Transverse colon (tissue), 4 donors: ENCODE measurements at regions of chr1 and their contacts with region 1.

Region 1: DNA sequence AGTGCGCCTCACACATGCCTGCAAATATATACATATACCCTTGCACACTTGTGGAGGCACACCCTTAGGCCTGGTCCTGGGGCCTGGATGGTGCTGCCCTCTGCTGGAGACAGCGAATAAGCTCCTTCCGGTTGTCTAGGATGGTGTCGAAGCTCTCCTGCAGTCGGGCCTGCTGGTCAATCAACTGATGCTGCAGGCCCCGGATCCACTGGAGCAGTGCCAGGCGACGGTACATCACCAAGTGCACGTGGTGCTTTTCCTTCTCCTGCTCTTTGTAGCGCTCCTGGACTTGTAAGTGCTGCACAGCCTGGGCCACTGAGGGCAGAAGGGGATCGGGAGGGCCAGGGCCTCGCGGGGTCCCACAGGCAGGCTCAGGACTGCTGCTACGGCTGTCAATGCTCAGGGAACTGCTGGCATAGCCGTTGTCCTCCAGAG is 3.1 kb downstream of the C1orf216 start:
- DNase-seq: peak; percentile 80
- H3K4me3 ChIP-seq: no peak overlapping the region
- H3K27ac ChIP-seq: no peak overlapping the region
- H3K4me1 ChIP-seq: peaks cover 12 to 38% (median 18%) of the 10 kb centered on the region in 4 donors
- H3K27me3 ChIP-seq: no peaks in the 10 kb centered on the region
- CTCF ChIP-seq: peak; percentile 62 to 89 (median 80)
- EP300 ChIP-seq: no peak
- POLR2A ChIP-seq: no peak

Region 2: DNA sequence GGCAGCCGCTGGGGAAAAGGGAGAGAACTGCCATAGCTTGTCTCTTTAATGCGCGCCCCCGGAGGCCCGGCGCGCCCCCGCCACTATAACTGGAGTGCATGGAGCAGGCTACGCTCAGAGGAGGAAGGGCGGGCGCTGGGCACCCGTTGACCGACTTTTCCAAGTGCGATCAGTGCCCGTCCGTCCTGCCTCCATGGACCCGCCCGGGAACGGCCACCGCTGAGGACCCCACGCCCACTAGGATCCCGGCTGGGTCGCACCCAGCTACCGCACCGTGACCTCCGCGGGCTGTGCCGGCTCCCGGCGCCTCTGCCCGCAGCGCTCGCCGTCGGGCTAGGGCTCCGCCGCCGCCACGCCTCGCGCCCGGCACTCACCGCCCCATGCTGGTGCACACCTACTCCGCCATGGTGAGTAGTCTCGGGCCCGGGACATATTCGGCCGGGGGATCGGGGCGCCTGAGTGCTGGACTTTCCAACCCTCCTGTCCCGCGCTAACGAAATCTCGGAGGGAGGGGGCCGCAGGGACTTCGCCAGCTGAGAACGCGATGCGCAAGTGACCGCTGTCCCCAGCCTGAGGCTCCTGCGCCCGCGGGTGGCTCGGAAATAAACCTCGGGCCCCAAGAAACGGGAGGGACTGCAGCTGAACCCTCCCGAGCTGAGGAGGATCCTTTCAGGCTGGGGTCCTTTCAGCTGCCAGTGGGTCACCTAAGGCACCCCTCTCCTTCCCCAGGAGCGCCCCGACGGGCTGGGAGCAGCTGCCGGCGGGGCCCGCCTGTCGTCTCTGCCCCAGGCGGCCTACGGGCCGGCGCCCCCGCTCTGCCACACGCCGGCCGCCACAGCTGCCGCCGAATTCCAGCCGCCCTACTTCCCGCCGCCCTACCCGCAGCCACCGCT is 142.1 kb before region 1 on chr1 and contains the start of gene TFAP2E:
- in situ Hi-C with region 1: loop called in 3 of 4 experiments (anchors 5 to 10 kb)
- intact Hi-C with region 1: no loop called
- DNase-seq: peak; percentile 65
- H3K4me3 ChIP-seq: peak within 1 kb of the TSS; percentile 22 to 43 (median 36)
- H3K27ac ChIP-seq: no peak within 1 kb of the TSS
- H3K4me1 ChIP-seq: peaks cover 0 to 35% (median 24%) of the 10 kb centered on the region in 4 donors
- H3K27me3 ChIP-seq: peaks cover 69% of the 10 kb centered on the region
- CTCF ChIP-seq: no peak
- EP300 ChIP-seq: no peak
- POLR2A ChIP-seq: peak; percentile 31
- total RNA-seq, gene TFAP2E: 0.27 to 1.4 TPM in 2 of 4 donors, not detected in the others

Region 3: DNA sequence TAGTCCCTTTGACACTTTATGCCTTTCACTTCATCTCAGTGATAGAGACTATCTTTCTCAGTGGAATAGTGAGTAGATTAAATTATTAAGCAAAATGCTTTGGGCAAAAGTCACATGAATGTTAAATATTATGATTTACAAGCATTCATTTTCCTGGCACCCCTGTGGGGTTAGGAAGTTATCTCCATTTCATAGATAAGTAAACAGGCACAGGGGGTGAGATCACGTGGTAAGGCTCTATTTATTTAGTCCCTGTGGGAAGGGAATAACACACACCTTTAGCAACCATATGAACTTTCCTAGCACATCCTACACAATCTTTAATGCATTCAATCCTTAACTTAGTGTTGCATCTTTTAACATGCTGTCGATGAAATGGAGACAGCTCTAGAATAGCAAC is 86.5 kb before region 1 on chr1:
- in situ Hi-C with region 1: no loop called
- intact Hi-C with region 1: no loop called
- DNase-seq: no peak
- H3K4me3 ChIP-seq: no peak overlapping the region
- H3K27ac ChIP-seq: no peak overlapping the region
- H3K4me1 ChIP-seq: no peaks in the 10 kb centered on the region
- H3K27me3 ChIP-seq: no peaks in the 10 kb centered on the region
- CTCF ChIP-seq: no peak
- EP300 ChIP-seq: no peak
- POLR2A ChIP-seq: no peak

Region 4: GRCh38 chr1:35656148-35656862 is 59.3 kb before region 1 on chr1:
- in situ Hi-C with region 1: loop called in 1 of 4 experiments (anchors 10 kb)
- intact Hi-C with region 1: no loop called
- DNase-seq: no peak
- H3K4me3 ChIP-seq: no peak overlapping the region
- H3K27ac ChIP-seq: no peak overlapping the region
- H3K4me1 ChIP-seq: no peaks in the 10 kb centered on the region
- H3K27me3 ChIP-seq: no peaks in the 10 kb centered on the region
- CTCF ChIP-seq: no peak
- EP300 ChIP-seq: no peak
- POLR2A ChIP-seq: no peak